ENCODE measurements at regions of chr13 and their contacts with region 1.

Region 1: DNA sequence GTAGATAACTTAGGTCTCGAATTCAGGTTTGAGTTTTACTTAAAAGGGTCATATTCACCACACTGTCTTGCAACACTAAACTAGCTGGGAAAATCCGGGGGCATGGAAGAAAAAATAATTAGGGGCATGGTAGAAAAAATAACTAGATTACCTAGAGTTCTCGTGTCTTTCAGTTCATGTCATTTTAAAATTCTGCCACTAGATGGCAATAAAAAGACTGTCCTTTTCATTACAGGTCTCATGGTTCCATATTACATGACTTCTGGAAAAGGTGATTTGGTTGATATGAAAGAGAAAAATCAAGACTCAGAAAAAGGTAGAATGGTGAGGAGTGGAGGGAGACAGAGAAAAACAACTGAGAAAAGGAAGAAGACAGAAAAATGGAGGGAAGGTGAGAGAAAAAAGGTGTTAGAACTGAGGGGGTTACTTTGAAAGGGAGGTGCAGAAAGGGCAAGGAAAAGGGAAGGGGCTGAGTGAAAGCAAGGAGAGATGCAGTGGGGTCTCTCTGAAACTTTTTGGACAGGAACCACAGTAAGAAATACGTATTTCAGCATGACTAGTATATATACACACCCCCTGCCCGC is 299.0 kb downstream of the KLF12 start:
- DNase-seq: peak; percentile 30
- ATAC-seq: peak; percentile 82
- H3K4me3 ChIP-seq: no peak overlapping the region
- H3K27ac ChIP-seq: no peak overlapping the region
- H3K4me1 ChIP-seq: no peaks in the 10 kb centered on the region
- H3K27me3 ChIP-seq: no peaks in the 10 kb centered on the region
- CTCF ChIP-seq: peak; percentile 55 to 58 (median 55); a peak in 5 of 6 replicates
- EP300 ChIP-seq: no peak
- POLR2A ChIP-seq: no peak
- RAD21 ChIP-seq: peak; percentile 74

Region 2: GRCh38 chr13:73722120-73722519 is 113.1 kb before region 1 on chr13:
- CTCF ChIA-PET with region 1: no interaction called
- POLR2A ChIA-PET with region 1: no interaction called
- RAD21 ChIA-PET with region 1: no interaction called
- SMC1A ChIA-PET with region 1: no interaction called
- in situ Hi-C with region 1: no loop called
- intact Hi-C with region 1: no loop called
- DNase-seq: peak; percentile 39
- ATAC-seq: peak; percentile 95
- H3K4me3 ChIP-seq: no peak overlapping the region
- H3K27ac ChIP-seq: no peak overlapping the region
- H3K4me1 ChIP-seq: no peaks in the 10 kb centered on the region
- H3K27me3 ChIP-seq: no peaks in the 10 kb centered on the region
- CTCF ChIP-seq: peak; percentile 26 to 41 (median 36); a peak in 5 of 6 replicates
- EP300 ChIP-seq: peak in 1 of 2 experiments; percentile 16; a peak in 1 of 4 replicates
- POLR2A ChIP-seq: no peak
- RAD21 ChIP-seq: peak; percentile 51; the same call in 1 of the 2 replicates

Region 3: DNA sequence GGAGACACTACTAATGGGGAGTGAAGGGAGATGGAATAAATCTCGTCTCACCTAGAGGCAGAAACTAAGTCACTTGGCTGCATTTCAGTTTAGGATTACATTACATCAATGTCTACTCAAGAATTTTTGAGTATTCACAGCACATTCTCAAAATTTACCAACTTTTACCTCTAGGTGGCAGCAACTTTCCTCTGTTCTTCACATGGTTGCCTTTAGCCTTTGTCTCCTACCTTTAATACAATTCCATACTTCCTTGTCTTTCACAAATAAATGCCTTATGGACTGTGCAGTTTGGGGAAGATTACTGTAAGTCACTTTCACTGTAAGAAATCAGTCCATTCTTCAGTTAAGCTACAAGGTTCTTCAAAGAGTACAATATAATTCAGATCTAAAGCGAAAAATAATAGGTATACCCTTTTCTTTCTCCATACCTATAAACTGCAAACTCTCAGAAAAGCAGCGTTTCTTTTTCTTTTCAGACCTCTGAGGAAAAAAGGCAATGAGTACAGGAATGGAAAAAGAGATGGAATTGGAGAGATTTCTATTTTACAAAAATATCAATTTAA is 80.4 kb before region 1 on chr13:
- CTCF ChIA-PET with region 1: interaction called, 3 read pairs
- POLR2A ChIA-PET with region 1: no interaction called
- RAD21 ChIA-PET with region 1: no interaction called
- SMC1A ChIA-PET with region 1: interaction called, 5 read pairs
- in situ Hi-C with region 1: no loop called
- intact Hi-C with region 1: loop called (anchors 2 kb)
- DNase-seq: no peak
- ATAC-seq: peak; percentile 86
- H3K4me3 ChIP-seq: no peak overlapping the region
- H3K27ac ChIP-seq: no peak overlapping the region
- H3K4me1 ChIP-seq: no peaks in the 10 kb centered on the region
- H3K27me3 ChIP-seq: no peaks in the 10 kb centered on the region
- CTCF ChIP-seq: peak; percentile 52 to 79 (median 68); a peak in 5 of 6 replicates
- EP300 ChIP-seq: no peak
- POLR2A ChIP-seq: no peak
- RAD21 ChIP-seq: peak; percentile 73

Region 4: DNA sequence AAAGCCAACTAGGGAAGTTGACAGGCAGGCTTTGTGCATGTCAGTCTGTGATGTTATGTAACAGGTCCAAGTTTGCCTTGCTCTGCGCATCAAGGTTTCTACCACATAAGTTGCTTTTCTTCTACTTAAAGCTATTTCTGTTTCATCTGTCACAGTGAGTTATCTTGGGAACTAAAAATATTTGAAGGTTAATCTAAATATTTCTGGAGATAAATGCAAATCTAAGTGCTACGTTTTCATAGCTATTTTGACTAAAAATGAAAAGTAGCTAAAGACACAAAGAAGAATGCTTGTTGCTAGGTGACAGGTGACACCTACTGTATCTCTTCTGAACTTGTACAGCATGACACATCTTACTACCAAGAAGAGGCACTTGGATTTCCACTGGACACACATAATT is 163.4 kb after region 1 on chr13:
- CTCF ChIA-PET with region 1: interaction called, 10 read pairs
- POLR2A ChIA-PET with region 1: no interaction called
- RAD21 ChIA-PET with region 1: interaction called, 4 read pairs
- SMC1A ChIA-PET with region 1: interaction called, 3 read pairs
- in situ Hi-C with region 1: no loop called
- intact Hi-C with region 1: no loop called
- DNase-seq: no peak
- ATAC-seq: peak; percentile 61
- H3K4me3 ChIP-seq: no peak overlapping the region
- H3K27ac ChIP-seq: no peak overlapping the region
- H3K4me1 ChIP-seq: peaks cover 6% of the 10 kb centered on the region
- H3K27me3 ChIP-seq: no peaks in the 10 kb centered on the region
- CTCF ChIP-seq: peak in 2 of 3 experiments; percentile 14 to 19; a peak in 2 of 6 replicates
- EP300 ChIP-seq: no peak
- POLR2A ChIP-seq: no peak
- RAD21 ChIP-seq: peak; percentile 37

Region 5: GRCh38 chr13:74133657-74134201 is 298.5 kb after region 1 on chr13:
- CTCF ChIA-PET with region 1: interaction called, 3 read pairs
- POLR2A ChIA-PET with region 1: no interaction called
- RAD21 ChIA-PET with region 1: interaction called, 3 read pairs
- SMC1A ChIA-PET with region 1: interaction called, 5 read pairs
- in situ Hi-C with region 1: no loop called
- intact Hi-C with region 1: loop called (anchors 1 kb)
- DNase-seq: peak; percentile 64
- ATAC-seq: peak; percentile 70
- H3K4me3 ChIP-seq: peak overlapping the region; percentile 82
- H3K27ac ChIP-seq: peak overlapping the region; percentile 45
- H3K4me1 ChIP-seq: peaks cover 5% of the 10 kb centered on the region; the same call in 1 of the 2 replicates
- H3K27me3 ChIP-seq: no peaks in the 10 kb centered on the region
- CTCF ChIP-seq: no peak
- EP300 ChIP-seq: peak in 1 of 2 experiments; percentile 25; a peak in 1 of 4 replicates
- POLR2A ChIP-seq: no peak; the same call in none of the 2 replicates
- RAD21 ChIP-seq: 0 out of 2 replicates have a peak, but pooled peaks have one; percentile 1

Region 6: GRCh38 chr13:75219479-75220237 is 1384.4 kb after region 1 on chr13:
- CTCF ChIA-PET with region 1: interaction called, 9 read pairs
- POLR2A ChIA-PET with region 1: no interaction called
- RAD21 ChIA-PET with region 1: interaction called, 8 read pairs
- SMC1A ChIA-PET with region 1: no interaction called
- in situ Hi-C with region 1: loop called (anchors 10 kb)
- intact Hi-C with region 1: loop called (anchors 5 kb)
- DNase-seq: peak; percentile 7
- ATAC-seq: peak; percentile 99
- H3K4me3 ChIP-seq: no peak overlapping the region
- H3K27ac ChIP-seq: no peak overlapping the region
- H3K4me1 ChIP-seq: no peaks in the 10 kb centered on the region
- H3K27me3 ChIP-seq: no peaks in the 10 kb centered on the region; a peak in 1 of 4 replicates
- CTCF ChIP-seq: peak; percentile 93 to 98 (median 96); a peak in 5 of 6 replicates
- EP300 ChIP-seq: no peak
- POLR2A ChIP-seq: no peak
- RAD21 ChIP-seq: peak; percentile 99

Measured in GM12878 (cell line).